Activated CD8-positive, alpha-beta T cell treated with anti-CD3 and anti-CD28 coated beads for 36 hours (primary cell): ENCODE measurements at regions of chr9 and their contacts with region 1.

Region 1: GRCh38 chr9:129995409-129996160 is 47.4 kb downstream of the FNBP1 start:
- DNase-seq: peak; percentile 65
- ATAC-seq: peak; percentile 44
- H3K4me3 Mint-ChIP-seq: peak overlapping the region; percentile 57
- H3K27ac Mint-ChIP-seq: peak overlapping the region; percentile 97
- H3K4me1 Mint-ChIP-seq: peaks cover 70% of the 10 kb centered on the region
- H3K27me3 Mint-ChIP-seq: no peaks in the 10 kb centered on the region
- CTCF ChIP-seq: no peak

Region 2: GRCh38 chr9:130010151-130010988 is 14.8 kb after region 1 on chr9:
- CTCF ChIA-PET with region 1: interaction called, 8 read pairs
- POLR2A ChIA-PET with region 1: interaction called, 26 read pairs
- intact Hi-C with region 1: no loop called
- DNase-seq: peak; percentile 63
- ATAC-seq: peak; percentile 71
- H3K4me3 Mint-ChIP-seq: peak overlapping the region; percentile 12
- H3K27ac Mint-ChIP-seq: peak overlapping the region; percentile 91
- H3K4me1 Mint-ChIP-seq: peaks cover 80% of the 10 kb centered on the region
- H3K27me3 Mint-ChIP-seq: no peaks in the 10 kb centered on the region
- CTCF ChIP-seq: no peak

Region 3: DNA sequence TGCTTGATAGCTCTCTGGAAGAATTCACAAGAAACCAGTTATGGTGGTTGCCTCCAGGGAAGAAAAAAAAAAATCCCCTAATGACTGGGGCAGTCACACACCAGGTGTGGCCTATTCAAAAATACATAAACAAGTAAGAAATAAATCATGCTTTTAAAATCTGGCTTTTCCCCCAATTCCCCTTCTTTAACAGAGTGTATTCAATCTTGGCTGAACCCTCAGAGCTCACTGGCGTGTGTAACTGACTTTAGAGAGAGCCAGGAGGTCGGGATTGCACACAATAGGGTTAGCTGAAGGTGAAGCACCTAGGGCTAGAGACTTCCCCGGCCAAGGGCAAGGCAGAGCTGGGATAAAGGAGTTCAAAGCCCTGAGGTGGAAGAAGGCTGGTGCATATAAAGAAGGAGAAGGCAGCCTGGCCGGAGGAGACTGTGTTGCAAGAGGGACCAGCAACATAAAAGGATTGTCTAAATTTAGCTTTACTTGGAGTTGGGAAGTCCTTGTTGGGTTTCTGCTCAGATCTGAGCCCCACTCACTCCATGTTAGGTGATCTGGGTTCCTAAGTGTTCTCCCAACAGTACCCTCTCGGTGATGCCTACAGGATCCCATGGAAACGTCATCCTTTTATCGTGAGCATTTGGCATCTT is 27.7 kb after region 1 on chr9:
- CTCF ChIA-PET with region 1: interaction called, 3 read pairs
- POLR2A ChIA-PET with region 1: interaction called, 29 read pairs
- intact Hi-C with region 1: no loop called
- DNase-seq: no peak
- ATAC-seq: peak; percentile 67
- H3K4me3 Mint-ChIP-seq: peak overlapping the region; percentile 30
- H3K27ac Mint-ChIP-seq: peak overlapping the region; percentile 99
- H3K4me1 Mint-ChIP-seq: peaks cover 90% of the 10 kb centered on the region
- H3K27me3 Mint-ChIP-seq: no peaks in the 10 kb centered on the region
- CTCF ChIP-seq: no peak